ENCODE measurements at regions of chr10 and their contacts with region 1.

Region 1: GRCh38 chr10:1183033-1183396 is 126.8 kb downstream of the WDR37 start:
- DNase-seq: no peak
- ATAC-seq: no peak
- H3K4me3 ChIP-seq: no peak overlapping the region
- H3K27ac ChIP-seq: no peak overlapping the region
- H3K4me1 ChIP-seq: peaks cover 0 to 29% of the 10 kb centered on the region in 2 experiments; a peak in 2 of 5 replicates
- H3K27me3 ChIP-seq: peaks cover 77 to 93% of the 10 kb centered on the region in 2 experiments
- CTCF ChIP-seq: no peak
- EP300 ChIP-seq: no peak
- POLR2A ChIP-seq: no peak
- RAD21 ChIP-seq: no peak

Region 2: DNA sequence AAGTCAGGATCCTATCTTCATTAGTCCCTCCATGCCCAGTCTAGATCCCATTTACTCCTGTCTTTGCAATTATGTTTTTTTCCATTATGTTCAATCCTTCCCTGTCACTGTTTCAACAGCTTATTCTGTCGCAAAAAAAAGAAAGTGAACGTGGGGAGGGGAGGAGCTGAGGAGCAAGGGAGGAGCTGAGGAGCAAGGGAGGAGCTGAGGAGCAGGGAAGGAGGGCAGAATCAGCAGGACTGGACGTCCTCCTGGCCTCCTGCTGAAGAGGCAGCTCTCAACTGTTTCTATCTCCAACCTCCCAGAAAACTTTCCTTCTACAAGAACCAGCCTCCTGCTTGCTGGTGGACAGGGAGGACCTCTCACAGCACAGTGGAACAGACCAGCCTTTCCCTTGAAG is 277.5 kb before region 1 on chr10:
- CTCF ChIA-PET with region 1: no interaction called
- POLR2A ChIA-PET with region 1: no interaction called
- in situ Hi-C with region 1: no loop called
- intact Hi-C with region 1: no loop called
- DNase-seq: peak in 2 of 4 experiments; percentile 26 to 28
- ATAC-seq: peak; percentile 76
- H3K4me3 ChIP-seq: no peak overlapping the region
- H3K27ac ChIP-seq: no peak overlapping the region
- H3K4me1 ChIP-seq: peaks cover 0 to 4% of the 10 kb centered on the region in 2 experiments; a peak in 3 of 5 replicates
- H3K27me3 ChIP-seq: no peaks in the 10 kb centered on the region
- CTCF ChIP-seq: no peak
- EP300 ChIP-seq: no peak
- POLR2A ChIP-seq: no peak
- RAD21 ChIP-seq: no peak

Region 3: GRCh38 chr10:1172256-1172984 is 10.6 kb before region 1 on chr10:
- CTCF ChIA-PET with region 1: no interaction called
- POLR2A ChIA-PET with region 1: interaction called, 11 read pairs
- in situ Hi-C with region 1: no loop called
- intact Hi-C with region 1: no loop called
- DNase-seq: no peak
- ATAC-seq: peak; percentile 33; the same call in 2 of the 3 replicates
- H3K4me3 ChIP-seq: no peak overlapping the region
- H3K27ac ChIP-seq: no peak overlapping the region
- H3K4me1 ChIP-seq: peaks cover 0 to 6% of the 10 kb centered on the region in 2 experiments; a peak in 1 of 5 replicates
- H3K27me3 ChIP-seq: peaks cover 39 to 79% of the 10 kb centered on the region in 2 experiments
- CTCF ChIP-seq: no peak
- EP300 ChIP-seq: no peak
- POLR2A ChIP-seq: no peak
- RAD21 ChIP-seq: no peak

Region 4: DNA sequence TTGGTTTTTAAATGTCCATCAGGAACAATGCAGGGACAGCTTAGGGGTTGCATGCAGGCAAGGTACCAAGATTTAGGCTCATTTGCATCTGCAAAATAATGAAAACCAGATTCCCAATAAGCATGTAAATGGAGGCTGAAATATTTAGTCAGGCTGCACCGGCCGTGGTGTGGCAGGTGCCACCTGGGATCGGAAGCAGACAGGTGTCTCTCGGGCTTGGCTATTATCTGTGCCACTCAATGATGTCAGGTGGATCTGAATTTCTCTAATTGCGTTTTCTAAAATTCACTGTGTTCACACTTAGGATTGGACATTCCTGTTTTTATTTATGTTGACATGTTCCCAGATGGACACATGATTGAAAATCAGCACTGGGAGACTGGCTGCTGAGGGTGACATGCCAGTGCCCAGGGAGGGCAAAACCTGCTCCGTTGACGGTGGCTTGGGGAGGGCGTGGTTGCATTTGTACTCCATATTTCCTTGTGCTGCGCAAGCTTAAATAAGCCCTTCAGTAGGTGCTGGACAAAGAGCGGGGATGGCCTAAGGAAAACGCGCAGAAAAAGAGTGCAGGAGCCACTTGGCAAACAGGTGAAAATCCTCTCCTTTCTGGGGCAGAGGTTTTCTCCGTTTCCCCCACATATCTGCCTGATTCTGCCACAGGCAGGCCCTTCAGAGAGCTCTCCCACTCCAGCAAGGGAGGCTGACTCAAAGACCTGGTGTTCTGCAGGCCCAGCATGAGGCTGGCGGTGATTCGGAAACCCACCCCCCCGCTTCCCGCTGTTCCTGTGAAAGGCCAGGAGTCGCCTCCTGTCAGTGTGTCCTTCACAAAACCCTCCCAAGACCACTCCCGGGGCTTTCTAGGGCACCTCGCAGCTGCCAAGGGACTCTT is 15.7 kb after region 1 on chr10:
- CTCF ChIA-PET with region 1: no interaction called
- POLR2A ChIA-PET with region 1: no interaction called
- in situ Hi-C with region 1: no loop called
- intact Hi-C with region 1: no loop called
- DNase-seq: no peak
- ATAC-seq: no peak
- H3K4me3 ChIP-seq: no peak overlapping the region
- H3K27ac ChIP-seq: no peak overlapping the region
- H3K4me1 ChIP-seq: peaks cover 0 to 4% of the 10 kb centered on the region in 2 experiments; a peak in 2 of 5 replicates
- H3K27me3 ChIP-seq: peaks cover 46 to 51% of the 10 kb centered on the region in 2 experiments
- CTCF ChIP-seq: no peak
- EP300 ChIP-seq: no peak
- POLR2A ChIP-seq: no peak
- RAD21 ChIP-seq: no peak